Left lung (tissue), 14 donors: ENCODE measurements at regions of chr4 and their contacts with region 1.

Region 1: DNA sequence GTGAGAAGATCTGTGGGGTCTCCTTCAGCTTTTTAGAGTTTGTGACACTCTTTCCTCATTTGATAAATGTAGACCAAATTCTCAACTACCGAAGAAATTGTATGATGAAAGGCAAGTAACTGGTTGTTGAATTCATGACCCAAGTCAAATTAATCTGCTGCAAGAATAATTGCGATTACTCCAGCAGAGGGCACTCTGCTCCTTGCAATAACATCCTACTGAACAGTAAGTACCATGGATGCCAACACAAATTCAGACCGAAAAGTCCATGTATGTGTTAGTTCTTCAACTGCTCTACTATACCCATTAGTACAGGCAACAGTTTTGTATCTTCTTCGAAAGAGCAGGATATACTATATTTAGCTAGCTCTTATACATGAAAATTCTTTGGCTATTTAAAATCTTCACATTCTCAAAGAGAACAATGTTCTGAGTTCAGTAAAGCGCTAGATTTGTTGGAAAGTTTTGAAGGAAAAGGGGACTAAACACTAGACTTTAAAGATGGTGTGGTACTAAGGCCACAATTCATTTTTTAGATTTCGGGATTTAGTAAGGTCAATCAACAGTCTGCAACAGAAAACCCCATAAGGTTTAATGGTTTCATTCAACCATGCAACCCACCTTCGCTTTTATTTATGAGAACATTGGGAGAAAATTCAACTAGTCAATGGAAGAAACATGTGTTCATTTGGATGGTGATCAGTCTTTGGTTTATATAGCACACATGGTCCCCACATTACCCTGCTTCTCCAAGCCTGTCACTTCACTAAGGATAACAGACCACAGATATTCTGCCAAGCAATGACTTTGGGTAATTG is 105.4 kb upstream of the TBC1D9 start:
- DNase-seq: peak in 2 of 4 donors; percentile 83 to 92
- ATAC-seq: peak; percentile 93
- H3K4me3 ChIP-seq: no peak overlapping the region
- H3K27ac ChIP-seq: no peak overlapping the region
- H3K4me1 ChIP-seq: no peaks in the 10 kb centered on the region
- H3K27me3 ChIP-seq: no peaks in the 10 kb centered on the region
- CTCF ChIP-seq: peak; percentile 51 to 66

Region 2: GRCh38 chr4:140904904-140905303 is 43.3 kb after region 1 on chr4:
- intact Hi-C with region 1: no loop called
- DNase-seq: peak in 2 of 4 donors; percentile 63 to 81
- ATAC-seq: no peak
- H3K4me3 ChIP-seq: no peak overlapping the region
- H3K27ac ChIP-seq: no peak overlapping the region
- H3K4me1 ChIP-seq: no peaks in the 10 kb centered on the region
- H3K27me3 ChIP-seq: no peaks in the 10 kb centered on the region
- CTCF ChIP-seq: no peak

Region 3: GRCh38 chr4:141102367-141102766 is 240.8 kb after region 1 on chr4:
- intact Hi-C with region 1: no loop called
- DNase-seq: no peak
- ATAC-seq: peak; percentile 50
- H3K4me3 ChIP-seq: no peak overlapping the region
- H3K27ac ChIP-seq: no peak overlapping the region
- H3K4me1 ChIP-seq: no peaks in the 10 kb centered on the region
- H3K27me3 ChIP-seq: no peaks in the 10 kb centered on the region
- CTCF ChIP-seq: no peak

Region 4: GRCh38 chr4:141133146-141133998 is 271.8 kb after region 1 on chr4 and contains the start of gene RNF150:
- intact Hi-C with region 1: loop called in 1 of 2 experiments (anchors 5 kb)
- DNase-seq: peak; percentile 65 to 94 (median 88)
- ATAC-seq: peak; percentile 92
- H3K4me3 ChIP-seq: peak within 1 kb of the TSS; percentile 54 to 58
- H3K27ac ChIP-seq: no peak within 1 kb of the TSS
- H3K4me1 ChIP-seq: peaks cover 4 to 14% of the 10 kb centered on the region in 2 donors
- H3K27me3 ChIP-seq: peaks cover 20 to 90% of the 10 kb centered on the region in 2 donors
- CTCF ChIP-seq: peak; percentile 30 to 56
- polyA plus RNA-seq, gene RNF150: 12.2 to 15.2 (median 14.7) TPM